SK-N-SH (cell line): ENCODE measurements at regions of chr11 and their contacts with region 1.

Region 1: GRCh38 chr11:72352859-72353551 is 81.3 kb downstream of the CLPB start:
- DNase-seq: peak; percentile 51
- H3K4me3 ChIP-seq: no peak overlapping the region
- H3K27ac ChIP-seq: peak overlapping the region; percentile 71 to 100
- H3K4me1 ChIP-seq: peaks cover 41 to 92% of the 10 kb centered on the region in 2 experiments
- H3K27me3 ChIP-seq: no peaks in the 10 kb centered on the region
- CTCF ChIP-seq: peak; percentile 77
- EP300 ChIP-seq: peak in 1 of 2 experiments; percentile 86; a peak in 2 of 4 replicates
- RAD21 ChIP-seq: peak; percentile 97

Region 2: GRCh38 chr11:72048766-72049456 is 304.1 kb before region 1 on chr11:
- CTCF ChIA-PET with region 1: no interaction called
- POLR2A ChIA-PET with region 1: no interaction called
- DNase-seq: no peak
- H3K4me3 ChIP-seq: no peak overlapping the region
- H3K27ac ChIP-seq: no peak overlapping the region; a peak in 1 of 4 replicates
- H3K4me1 ChIP-seq: peaks cover 0 to 4% of the 10 kb centered on the region in 2 experiments; a peak in 1 of 4 replicates
- H3K27me3 ChIP-seq: no peaks in the 10 kb centered on the region
- CTCF ChIP-seq: no peak
- EP300 ChIP-seq: no peak
- RAD21 ChIP-seq: no peak

Region 3: DNA sequence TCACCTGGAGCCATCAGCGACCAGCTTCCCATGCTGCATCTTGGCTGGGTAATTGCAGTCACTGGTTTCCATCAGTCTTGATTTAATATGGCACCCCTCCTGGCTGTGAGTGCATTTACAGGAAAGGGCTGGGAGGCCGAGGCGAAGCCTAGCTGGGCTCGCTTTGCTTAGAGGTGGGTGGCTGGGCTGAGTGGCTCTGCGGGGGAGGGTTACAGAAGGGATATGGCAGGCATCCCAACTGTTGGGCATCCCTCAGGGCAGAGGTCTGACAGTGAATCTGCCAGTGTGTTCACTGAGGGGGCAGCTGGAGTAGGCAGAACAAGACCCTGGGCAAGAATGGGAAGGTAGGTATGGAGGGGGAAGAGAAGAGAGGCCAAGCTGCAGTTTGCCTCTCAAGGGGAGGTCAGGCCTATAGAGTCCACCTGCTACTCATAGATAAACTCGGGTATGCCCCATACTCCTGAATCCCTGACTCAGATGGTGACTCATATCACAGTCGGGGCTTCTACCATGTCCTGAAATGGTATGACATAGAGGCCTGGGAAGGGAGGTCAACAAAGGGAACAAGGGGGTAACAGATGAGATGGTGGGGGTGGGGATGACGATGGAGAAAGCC is 31.5 kb before region 1 on chr11:
- CTCF ChIA-PET with region 1: interaction called, 637 read pairs
- POLR2A ChIA-PET with region 1: interaction called, 96 read pairs
- DNase-seq: peak; percentile 78
- H3K4me3 ChIP-seq: no peak overlapping the region
- H3K27ac ChIP-seq: peak overlapping the region; percentile 75 to 100
- H3K4me1 ChIP-seq: peaks cover 34 to 72% of the 10 kb centered on the region in 2 experiments
- H3K27me3 ChIP-seq: no peaks in the 10 kb centered on the region
- CTCF ChIP-seq: no peak
- EP300 ChIP-seq: peak; percentile 95 to 100
- RAD21 ChIP-seq: peak; percentile 44; the same call in 1 of the 2 replicates

Region 4: GRCh38 chr11:72328366-72329224 is 24.4 kb before region 1 on chr11:
- CTCF ChIA-PET with region 1: interaction called, 637 read pairs
- POLR2A ChIA-PET with region 1: interaction called, 46 read pairs
- DNase-seq: no peak
- H3K4me3 ChIP-seq: no peak overlapping the region
- H3K27ac ChIP-seq: peak overlapping the region; percentile 87 to 100
- H3K4me1 ChIP-seq: peaks cover 62 to 71% of the 10 kb centered on the region in 2 experiments
- H3K27me3 ChIP-seq: no peaks in the 10 kb centered on the region
- CTCF ChIP-seq: peak; percentile 51
- EP300 ChIP-seq: peak; percentile 42 to 61; a peak in 3 of 4 replicates
- RAD21 ChIP-seq: peak; percentile 24; the same call in 1 of the 2 replicates

Region 5: GRCh38 chr11:72333661-72334060 is 19.3 kb before region 1 on chr11:
- CTCF ChIA-PET with region 1: interaction called, 637 read pairs
- POLR2A ChIA-PET with region 1: interaction called, 46 read pairs
- DNase-seq: peak; percentile 61
- H3K4me3 ChIP-seq: no peak overlapping the region
- H3K27ac ChIP-seq: peak overlapping the region; percentile 35 to 99; a peak in 3 of 4 replicates
- H3K4me1 ChIP-seq: peaks cover 32 to 75% of the 10 kb centered on the region in 2 experiments
- H3K27me3 ChIP-seq: no peaks in the 10 kb centered on the region
- CTCF ChIP-seq: peak; percentile 52
- EP300 ChIP-seq: peak in 1 of 2 experiments; percentile 59; a peak in 1 of 4 replicates
- RAD21 ChIP-seq: peak; percentile 73

Region 6: GRCh38 chr11:72338741-72339140 is 14.3 kb before region 1 on chr11:
- CTCF ChIA-PET with region 1: interaction called, 637 read pairs
- POLR2A ChIA-PET with region 1: interaction called, 46 read pairs
- DNase-seq: no peak
- H3K4me3 ChIP-seq: no peak overlapping the region
- H3K27ac ChIP-seq: peak overlapping the region; percentile 15 to 99; a peak in 3 of 4 replicates
- H3K4me1 ChIP-seq: peaks cover 18 to 84% of the 10 kb centered on the region in 2 experiments; a peak in 3 of 4 replicates
- H3K27me3 ChIP-seq: no peaks in the 10 kb centered on the region
- CTCF ChIP-seq: no peak
- EP300 ChIP-seq: peak in 1 of 2 experiments; percentile 66; a peak in 1 of 4 replicates
- RAD21 ChIP-seq: no peak

Region 7: DNA sequence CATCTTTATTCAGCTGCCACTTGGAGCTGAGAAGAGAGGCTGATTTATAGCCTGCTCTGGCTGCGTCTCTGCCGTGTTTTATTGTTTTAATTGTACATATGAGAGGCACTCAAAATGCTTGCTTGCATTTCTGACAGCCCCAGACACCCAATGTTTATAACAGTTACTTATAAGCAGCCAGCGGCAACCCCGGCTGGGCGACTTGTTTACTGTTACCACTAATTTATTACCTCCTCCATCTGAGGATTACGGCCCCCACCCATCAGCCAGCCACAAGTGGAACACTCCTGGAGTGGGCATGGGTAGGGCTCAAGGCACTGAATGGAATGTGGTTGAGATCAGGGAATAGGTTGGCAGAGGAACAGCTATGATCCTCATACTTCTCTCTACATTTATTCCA is 20.2 kb after region 1 on chr11:
- CTCF ChIA-PET with region 1: interaction called, 7 read pairs
- POLR2A ChIA-PET with region 1: interaction called, 12 read pairs
- DNase-seq: no peak
- H3K4me3 ChIP-seq: no peak overlapping the region
- H3K27ac ChIP-seq: peak overlapping the region in 1 of 2 experiments; percentile 99; a peak in 2 of 4 replicates
- H3K4me1 ChIP-seq: peaks cover 20 to 44% of the 10 kb centered on the region in 2 experiments
- H3K27me3 ChIP-seq: no peaks in the 10 kb centered on the region
- CTCF ChIP-seq: no peak
- EP300 ChIP-seq: 0 out of 4 replicates have a peak, but pooled peaks of 1 of the 2 experiments have one; percentile 13
- RAD21 ChIP-seq: no peak

Region 8: DNA sequence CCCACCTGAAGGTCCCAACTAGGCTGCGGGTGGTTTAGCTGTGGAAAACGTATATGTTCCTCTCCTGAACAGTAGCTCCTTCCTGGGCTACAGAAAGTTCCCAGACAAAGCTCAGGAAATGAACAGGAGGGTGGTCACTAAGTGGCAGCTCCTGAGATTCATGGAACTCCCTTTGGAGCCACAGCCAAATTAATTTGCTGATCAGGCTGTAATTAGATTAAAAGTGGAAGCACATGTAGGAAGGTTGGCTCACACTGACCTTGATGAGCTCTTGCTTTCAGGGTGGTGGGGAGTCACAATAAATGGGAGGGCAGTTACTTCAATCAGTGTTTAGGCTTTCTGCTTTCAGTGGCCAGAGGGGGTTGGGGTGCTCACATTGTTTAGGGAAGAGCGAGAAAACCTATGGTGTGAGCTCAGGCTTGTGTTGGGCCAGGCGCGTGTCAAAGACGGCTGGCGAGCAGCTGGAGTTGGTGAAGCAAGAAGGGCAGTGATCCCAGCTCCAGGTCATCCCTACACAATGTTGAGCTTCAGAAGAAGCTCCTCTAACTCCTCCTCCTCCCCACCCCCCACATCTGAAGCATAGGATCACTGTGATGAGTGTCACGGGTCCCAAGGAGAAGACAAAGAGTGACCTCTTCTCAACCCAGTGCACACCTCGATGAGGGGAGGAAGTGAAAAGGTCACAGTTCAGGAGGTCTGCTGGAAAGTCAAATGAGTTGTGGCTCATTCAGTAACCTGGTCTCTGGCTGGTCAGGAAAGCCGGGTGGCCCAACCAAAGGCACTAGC is 38.8 kb after region 1 on chr11:
- CTCF ChIA-PET with region 1: no interaction called
- POLR2A ChIA-PET with region 1: no interaction called
- DNase-seq: no peak
- H3K4me3 ChIP-seq: no peak overlapping the region
- H3K27ac ChIP-seq: no peak overlapping the region; a peak in 1 of 4 replicates
- H3K4me1 ChIP-seq: peaks cover 8 to 35% of the 10 kb centered on the region in 2 experiments; a peak in 2 of 4 replicates
- H3K27me3 ChIP-seq: no peaks in the 10 kb centered on the region
- CTCF ChIP-seq: no peak
- EP300 ChIP-seq: no peak
- RAD21 ChIP-seq: no peak

Region 9: DNA sequence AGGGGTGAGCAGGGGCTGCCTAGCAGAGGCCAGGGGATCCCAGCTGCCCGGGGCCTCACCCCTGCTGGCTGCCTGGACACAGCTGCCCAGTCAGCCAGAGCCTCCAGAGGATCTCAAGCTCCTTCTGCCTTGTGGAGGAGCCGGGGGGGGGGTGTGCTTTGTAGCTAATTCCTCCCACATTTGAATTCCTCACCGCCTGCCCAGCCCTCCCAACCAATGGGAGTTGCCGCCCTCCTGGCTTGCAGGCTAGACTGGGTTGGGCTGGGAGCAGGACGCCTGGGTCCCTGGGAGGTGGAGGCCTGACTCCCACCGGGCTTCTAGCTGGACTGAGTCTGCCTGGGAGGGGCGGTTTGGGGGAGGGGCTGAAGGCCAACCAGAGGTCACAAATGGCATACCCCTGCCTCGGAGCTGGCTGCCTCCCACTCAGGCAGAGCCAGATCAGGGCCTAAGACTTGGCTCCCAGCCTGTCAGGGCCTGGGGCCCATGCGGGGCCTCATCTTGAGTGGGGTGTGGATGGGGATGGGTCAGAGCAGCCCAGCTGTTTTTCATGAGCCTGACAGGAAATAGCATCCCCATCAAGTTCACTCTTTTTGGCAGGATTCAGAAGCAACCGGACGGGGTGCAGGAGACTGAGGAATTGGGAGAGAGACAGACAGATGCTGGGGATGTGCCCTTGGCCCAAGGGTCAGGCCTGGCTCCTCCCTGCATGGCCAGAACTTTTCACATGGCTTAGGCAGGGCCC is 350.4 kb after region 1 on chr11:
- CTCF ChIA-PET with region 1: no interaction called
- POLR2A ChIA-PET with region 1: no interaction called
- DNase-seq: no peak
- H3K4me3 ChIP-seq: no peak overlapping the region
- H3K27ac ChIP-seq: peak overlapping the region in 1 of 2 experiments; percentile 44; a peak in 1 of 4 replicates
- H3K4me1 ChIP-seq: peaks cover 0 to 12% of the 10 kb centered on the region in 2 experiments; a peak in 1 of 4 replicates
- H3K27me3 ChIP-seq: no peaks in the 10 kb centered on the region
- CTCF ChIP-seq: no peak
- EP300 ChIP-seq: no peak
- RAD21 ChIP-seq: no peak

Region 10: DNA sequence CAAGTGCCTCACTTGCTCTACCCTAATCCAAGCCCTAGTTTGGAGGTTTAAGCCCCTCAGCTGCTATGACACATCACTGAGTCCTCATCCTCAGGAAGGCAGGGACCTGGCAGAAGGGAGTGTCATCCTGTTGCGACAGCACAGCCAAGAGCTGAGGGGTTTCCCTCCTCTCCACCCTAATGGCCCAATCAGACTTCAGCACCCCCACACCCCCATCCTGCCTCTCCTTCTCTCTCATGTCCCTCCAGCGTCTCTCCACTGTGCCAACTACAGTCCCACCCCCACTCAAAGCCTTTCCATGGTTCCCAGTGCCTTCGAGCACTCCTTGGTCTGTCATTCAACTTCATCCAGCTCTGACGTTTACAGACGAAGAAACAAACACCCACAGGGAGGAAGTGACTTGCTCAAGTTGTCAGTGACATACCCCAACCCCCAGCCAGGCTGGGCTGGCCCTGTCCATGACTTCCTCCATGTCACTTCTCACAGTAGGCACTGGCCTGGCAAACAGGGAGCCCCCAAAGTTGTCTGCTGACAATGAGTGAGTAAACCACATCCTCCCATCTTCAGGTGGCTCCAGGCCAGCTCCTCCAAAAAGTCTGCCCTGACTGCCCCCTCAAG is 383.6 kb after region 1 on chr11:
- CTCF ChIA-PET with region 1: no interaction called
- POLR2A ChIA-PET with region 1: no interaction called
- DNase-seq: no peak
- H3K4me3 ChIP-seq: no peak overlapping the region
- H3K27ac ChIP-seq: peak overlapping the region; percentile 53 to 64
- H3K4me1 ChIP-seq: peaks cover 21 to 46% of the 10 kb centered on the region in 2 experiments; a peak in 3 of 4 replicates
- H3K27me3 ChIP-seq: no peaks in the 10 kb centered on the region
- CTCF ChIP-seq: no peak
- EP300 ChIP-seq: no peak
- RAD21 ChIP-seq: no peak